Activated CD4-positive, alpha-beta T cell treated with anti-CD3 and anti-CD28 coated beads for 36 hours (primary cell): ENCODE measurements at regions of chr14 and their contacts with region 1.

Region 1: GRCh38 chr14:23631702-23632460 is 4.3 kb upstream of the DHRS2 start:
- DNase-seq: peak; percentile 86
- ATAC-seq: peak; percentile 85
- H3K4me3 Mint-ChIP-seq: no peak overlapping the region
- H3K27ac Mint-ChIP-seq: no peak overlapping the region
- H3K4me1 Mint-ChIP-seq: peaks cover 5% of the 10 kb centered on the region
- H3K27me3 Mint-ChIP-seq: peaks cover 3% of the 10 kb centered on the region

Region 2: DNA sequence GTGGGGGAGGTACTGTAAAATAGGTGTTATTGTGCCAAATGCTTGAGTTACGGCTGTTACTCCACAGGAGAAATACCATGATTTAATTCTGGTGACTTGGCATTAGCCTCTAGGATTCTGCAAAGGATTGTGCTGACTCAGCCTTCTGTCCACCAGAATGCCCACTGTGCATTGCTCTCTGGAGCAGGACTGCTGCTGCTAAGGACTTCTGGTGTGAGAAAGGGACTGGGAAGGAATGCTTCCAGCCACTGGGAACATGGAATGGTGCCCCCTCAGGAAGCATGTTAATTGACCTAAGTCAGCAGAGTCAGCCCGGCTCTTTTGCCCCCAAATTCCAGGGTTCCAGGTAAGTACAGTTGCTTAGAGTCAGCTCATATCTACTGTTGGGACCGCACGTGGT is 113.2 kb before region 1 on chr14:
- CTCF ChIA-PET with region 1: no interaction called
- POLR2A ChIA-PET with region 1: no interaction called
- intact Hi-C with region 1: no loop called
- DNase-seq: no peak
- ATAC-seq: no peak
- H3K4me3 Mint-ChIP-seq: no peak overlapping the region
- H3K27ac Mint-ChIP-seq: no peak overlapping the region
- H3K4me1 Mint-ChIP-seq: no peaks in the 10 kb centered on the region
- H3K27me3 Mint-ChIP-seq: no peaks in the 10 kb centered on the region

Region 3: GRCh38 chr14:23588884-23589598 is 42.8 kb before region 1 on chr14:
- CTCF ChIA-PET with region 1: interaction called, 37 read pairs
- POLR2A ChIA-PET with region 1: no interaction called
- intact Hi-C with region 1: loop called (anchors 1 to 2 kb)
- DNase-seq: peak; percentile 93
- ATAC-seq: peak; percentile 99
- H3K4me3 Mint-ChIP-seq: no peak overlapping the region
- H3K27ac Mint-ChIP-seq: no peak overlapping the region
- H3K4me1 Mint-ChIP-seq: peaks cover 7% of the 10 kb centered on the region
- H3K27me3 Mint-ChIP-seq: peaks cover 16% of the 10 kb centered on the region

Region 4: DNA sequence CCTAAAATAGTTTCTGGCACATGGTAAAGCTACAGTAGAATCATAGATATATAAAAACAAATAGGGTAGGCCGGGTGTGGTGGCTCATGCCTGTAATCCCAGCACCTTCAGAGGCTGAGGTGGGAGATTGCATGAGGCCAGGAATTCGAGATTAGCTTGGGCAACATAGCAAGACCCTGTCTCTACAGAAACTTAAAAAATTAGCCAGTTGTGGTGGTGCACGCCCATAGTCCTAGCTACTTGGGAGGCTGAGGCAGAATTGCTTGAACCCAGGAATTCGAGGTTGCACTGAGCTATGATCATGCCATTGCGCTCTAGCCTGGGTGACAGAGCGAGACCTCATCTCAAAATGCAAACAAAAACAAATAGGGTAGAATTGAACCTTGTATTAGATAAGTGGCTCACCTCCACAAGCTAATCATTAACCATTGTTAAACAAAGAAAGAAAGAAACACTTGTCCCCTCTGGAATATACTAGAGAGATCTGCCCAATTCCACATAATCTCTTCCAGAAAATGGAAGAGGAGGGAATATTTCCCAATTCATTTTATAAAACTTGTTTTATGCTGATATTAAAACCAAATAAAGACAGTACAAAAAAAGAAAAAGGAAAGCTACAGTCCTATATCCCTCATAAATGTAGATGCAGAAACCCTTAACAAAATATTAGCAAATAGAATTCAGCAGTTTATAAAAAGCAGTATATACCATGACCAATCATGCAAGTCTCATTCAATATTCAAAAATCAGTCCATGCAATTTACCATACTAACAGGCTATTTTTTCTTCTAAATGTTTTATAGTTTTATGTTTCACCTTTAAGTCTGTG is 18.4 kb before region 1 on chr14:
- CTCF ChIA-PET with region 1: interaction called, 31 read pairs
- POLR2A ChIA-PET with region 1: no interaction called
- intact Hi-C with region 1: no loop called
- DNase-seq: no peak
- ATAC-seq: no peak
- H3K4me3 Mint-ChIP-seq: no peak overlapping the region
- H3K27ac Mint-ChIP-seq: no peak overlapping the region
- H3K4me1 Mint-ChIP-seq: peaks cover 28% of the 10 kb centered on the region
- H3K27me3 Mint-ChIP-seq: no peaks in the 10 kb centered on the region

Region 5: GRCh38 chr14:23646648-23647549 is 15.0 kb after region 1 on chr14:
- CTCF ChIA-PET with region 1: interaction called, 35 read pairs
- POLR2A ChIA-PET with region 1: no interaction called
- intact Hi-C with region 1: no loop called
- DNase-seq: no peak
- ATAC-seq: no peak
- H3K4me3 Mint-ChIP-seq: no peak overlapping the region
- H3K27ac Mint-ChIP-seq: no peak overlapping the region
- H3K4me1 Mint-ChIP-seq: no peaks in the 10 kb centered on the region
- H3K27me3 Mint-ChIP-seq: no peaks in the 10 kb centered on the region

Region 6: DNA sequence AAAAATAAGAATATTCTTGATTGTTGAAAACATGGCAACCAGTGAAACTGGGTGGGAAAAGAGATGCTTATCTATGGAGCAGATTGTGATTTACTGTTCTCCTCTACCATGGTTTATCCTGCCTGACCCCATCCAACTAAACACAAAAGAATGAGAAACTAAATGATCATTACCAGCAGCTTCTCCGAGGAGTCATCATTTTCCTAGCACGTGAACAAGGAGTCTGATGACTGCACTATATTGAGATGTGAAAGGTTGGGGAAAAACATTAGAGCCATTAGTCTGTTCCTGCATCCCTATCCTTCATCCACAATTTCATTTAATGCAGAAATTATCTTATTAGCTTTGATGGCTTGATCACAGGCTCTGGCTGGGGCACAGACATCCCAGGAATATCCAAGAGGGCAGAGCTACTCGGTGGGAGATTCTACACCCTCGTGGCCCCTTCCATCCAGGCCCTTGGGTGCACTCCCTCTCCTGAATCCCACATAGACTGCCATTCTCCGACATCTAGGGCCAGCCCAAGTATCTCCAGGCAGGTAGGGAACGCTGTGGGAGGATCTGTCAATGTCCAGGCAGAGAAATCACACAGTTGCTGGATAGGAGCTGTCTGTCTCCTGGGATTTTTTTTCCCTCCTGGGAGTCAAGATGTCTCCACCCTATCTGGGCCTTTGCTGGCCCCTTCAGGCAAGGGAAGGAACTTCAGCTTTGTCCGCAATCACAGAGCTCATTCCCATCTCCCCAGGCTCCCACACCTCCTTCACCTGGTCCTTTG is 278.4 kb after region 1 on chr14:
- CTCF ChIA-PET with region 1: interaction called, 25 read pairs
- POLR2A ChIA-PET with region 1: no interaction called
- intact Hi-C with region 1: loop called in 1 of 2 experiments (anchors 5 kb)
- DNase-seq: peak; percentile 46
- ATAC-seq: no peak
- H3K4me3 Mint-ChIP-seq: no peak overlapping the region
- H3K27ac Mint-ChIP-seq: no peak overlapping the region
- H3K4me1 Mint-ChIP-seq: no peaks in the 10 kb centered on the region
- H3K27me3 Mint-ChIP-seq: peaks cover 18% of the 10 kb centered on the region

Region 7: GRCh38 chr14:23953464-23954278 is 321.8 kb after region 1 on chr14 and contains the start of gene DHRS4:
- CTCF ChIA-PET with region 1: interaction called, 7 read pairs
- POLR2A ChIA-PET with region 1: no interaction called
- intact Hi-C with region 1: loop called (anchors 1 kb)
- DNase-seq: peak; percentile 89
- ATAC-seq: peak; percentile 96
- H3K4me3 Mint-ChIP-seq: peak within 1 kb of the TSS; percentile 88
- H3K27ac Mint-ChIP-seq: peak within 1 kb of the TSS; percentile 93
- H3K4me1 Mint-ChIP-seq: peaks cover 23% of the 10 kb centered on the region
- H3K27me3 Mint-ChIP-seq: no peaks in the 10 kb centered on the region
- total RNA-seq, gene DHRS4: 32.2 to 36.2 TPM

Region 8: DNA sequence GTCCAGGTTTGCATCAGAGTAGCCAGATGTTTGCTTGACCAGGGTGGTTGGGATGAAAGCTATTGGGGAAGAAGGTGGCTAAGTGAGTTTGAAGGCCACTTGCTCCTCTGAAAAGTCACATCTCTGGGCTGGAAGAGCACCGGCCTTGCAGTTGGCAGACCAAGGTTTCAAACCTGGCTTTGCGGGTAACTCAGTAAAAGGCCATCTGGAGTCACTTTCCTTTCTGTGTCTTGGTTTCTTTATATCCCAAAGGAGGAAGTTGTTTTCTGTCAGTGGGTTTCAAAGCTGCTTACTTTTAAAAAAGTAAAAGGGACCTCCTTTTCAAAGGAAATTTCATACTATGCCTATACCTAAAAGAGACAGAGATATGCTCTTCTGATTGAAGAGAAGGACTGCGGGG is 902.4 kb after region 1 on chr14:
- CTCF ChIA-PET with region 1: no interaction called
- POLR2A ChIA-PET with region 1: no interaction called
- intact Hi-C with region 1: no loop called
- DNase-seq: no peak
- ATAC-seq: no peak
- H3K4me3 Mint-ChIP-seq: no peak overlapping the region
- H3K27ac Mint-ChIP-seq: no peak overlapping the region
- H3K4me1 Mint-ChIP-seq: peaks cover 2% of the 10 kb centered on the region
- H3K27me3 Mint-ChIP-seq: peaks cover 11% of the 10 kb centered on the region